Activated CD8-positive, alpha-beta T cell treated with anti-CD3 and anti-CD28 coated beads for 36 hours (primary cell): ENCODE measurements at regions of chr12 and their contacts with region 1.

Region 1: DNA sequence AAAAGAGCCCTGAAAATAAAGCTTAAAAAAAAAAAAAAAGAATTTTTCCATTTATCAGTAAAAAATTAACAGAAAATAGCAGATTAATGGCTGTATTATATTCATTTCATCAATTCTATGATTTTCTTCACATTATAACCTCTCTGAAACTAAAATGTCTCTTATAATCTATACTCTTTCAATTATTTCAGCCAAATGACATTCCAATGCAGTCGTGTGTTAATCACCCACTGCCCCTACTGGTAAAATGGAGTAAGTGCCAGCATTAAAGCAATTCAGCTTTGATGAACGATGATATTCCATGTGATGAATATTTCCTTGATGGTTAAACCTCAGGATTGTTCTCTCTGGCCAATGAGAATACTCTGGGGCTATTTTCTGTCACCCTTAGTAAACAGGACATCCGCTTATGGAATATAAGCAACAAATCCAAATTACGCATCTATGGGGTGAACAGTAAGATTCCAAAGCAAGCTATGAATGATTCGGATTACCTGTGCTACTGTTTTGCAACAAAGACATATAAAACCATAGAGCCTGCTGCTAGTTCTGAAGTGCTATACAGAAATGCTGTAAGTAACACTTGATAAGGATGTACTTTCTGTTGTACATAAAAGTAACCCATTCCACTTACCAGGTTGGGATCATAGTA is 20.3 kb upstream of the SYCP3 start:
- DNase-seq: no peak
- ATAC-seq: peak; percentile 70
- H3K4me3 Mint-ChIP-seq: no peak overlapping the region
- H3K27ac Mint-ChIP-seq: no peak overlapping the region
- H3K4me1 Mint-ChIP-seq: no peaks in the 10 kb centered on the region
- H3K27me3 Mint-ChIP-seq: no peaks in the 10 kb centered on the region
- CTCF ChIP-seq: peak; percentile 72

Region 2: GRCh38 chr12:101414533-101415119 is 344.9 kb before region 1 on chr12:
- CTCF ChIA-PET with region 1: interaction called, 10 read pairs
- POLR2A ChIA-PET with region 1: no interaction called
- intact Hi-C with region 1: loop called (anchors 10 kb)
- DNase-seq: peak; percentile 35
- ATAC-seq: no peak
- H3K4me3 Mint-ChIP-seq: no peak overlapping the region
- H3K27ac Mint-ChIP-seq: no peak overlapping the region
- H3K4me1 Mint-ChIP-seq: peaks cover 2% of the 10 kb centered on the region
- H3K27me3 Mint-ChIP-seq: peaks cover 8% of the 10 kb centered on the region
- CTCF ChIP-seq: peak; percentile 82

Region 3: DNA sequence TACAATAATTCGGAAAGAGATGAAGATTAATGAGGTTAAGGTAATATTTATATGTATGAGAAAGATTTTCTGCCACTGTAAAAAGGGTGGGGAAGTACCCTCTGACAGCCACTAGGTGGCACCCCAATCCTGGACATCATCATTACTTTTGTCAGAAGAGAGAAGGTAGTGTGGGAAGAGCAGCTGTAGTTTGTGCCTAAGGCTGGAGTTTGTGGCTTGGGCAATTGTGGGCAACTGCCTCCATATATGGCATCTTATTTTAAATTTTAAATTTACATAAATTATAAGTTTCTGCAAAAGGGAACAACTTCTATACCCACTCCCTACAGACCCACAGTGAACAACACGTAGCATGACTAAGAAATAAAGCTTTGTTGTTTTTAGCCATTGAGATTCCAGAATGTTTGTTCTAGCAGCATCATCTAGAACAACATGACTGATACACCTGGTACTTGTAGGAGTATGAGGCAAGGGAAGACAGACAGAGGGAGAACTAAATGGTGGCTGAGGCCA is 14.2 kb after region 1 on chr12:
- CTCF ChIA-PET with region 1: interaction called, 16 read pairs
- POLR2A ChIA-PET with region 1: interaction called, 3 read pairs
- intact Hi-C with region 1: no loop called
- DNase-seq: peak; percentile 72
- ATAC-seq: peak; percentile 95
- H3K4me3 Mint-ChIP-seq: no peak overlapping the region
- H3K27ac Mint-ChIP-seq: no peak overlapping the region
- H3K4me1 Mint-ChIP-seq: peaks cover 4% of the 10 kb centered on the region
- H3K27me3 Mint-ChIP-seq: no peaks in the 10 kb centered on the region
- CTCF ChIP-seq: peak; percentile 86

Region 4: DNA sequence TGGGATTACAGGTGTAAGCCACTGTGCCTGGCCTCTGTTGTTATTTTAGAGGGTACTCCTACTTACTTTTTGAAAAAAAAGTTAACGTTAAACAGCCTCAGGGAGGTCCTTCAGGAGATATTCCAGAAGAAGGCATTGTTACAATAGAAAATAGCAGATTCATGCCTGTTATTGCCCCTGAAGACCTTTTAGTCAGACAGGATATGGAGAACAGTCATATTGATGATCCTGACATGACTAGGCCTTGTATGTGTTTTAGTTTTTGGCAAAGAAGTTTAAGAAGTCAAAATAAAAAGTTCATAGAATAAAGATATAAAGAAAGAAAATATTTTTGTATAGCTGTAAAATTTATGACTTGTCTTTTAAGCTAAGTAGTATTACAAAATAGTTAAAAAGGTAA is 256.9 kb after region 1 on chr12:
- CTCF ChIA-PET with region 1: no interaction called
- POLR2A ChIA-PET with region 1: no interaction called
- intact Hi-C with region 1: no loop called
- DNase-seq: no peak
- ATAC-seq: no peak
- H3K4me3 Mint-ChIP-seq: no peak overlapping the region
- H3K27ac Mint-ChIP-seq: no peak overlapping the region
- H3K4me1 Mint-ChIP-seq: no peaks in the 10 kb centered on the region
- H3K27me3 Mint-ChIP-seq: no peaks in the 10 kb centered on the region
- CTCF ChIP-seq: no peak